SK-N-SH (cell line): ENCODE measurements at regions of chr11 and their contacts with region 1.

Region 1: GRCh38 chr11:74255741-74256369 is 55.6 kb downstream of the P4HA3 start:
- DNase-seq: peak; percentile 73
- H3K4me3 ChIP-seq: no peak overlapping the region; a peak in 1 of 4 replicates
- H3K27ac ChIP-seq: no peak overlapping the region
- H3K4me1 ChIP-seq: peaks cover 0 to 10% of the 10 kb centered on the region in 2 experiments; a peak in 1 of 4 replicates
- H3K27me3 ChIP-seq: no peaks in the 10 kb centered on the region
- CTCF ChIP-seq: peak; percentile 97
- EP300 ChIP-seq: no peak
- RAD21 ChIP-seq: peak; percentile 90

Region 2: DNA sequence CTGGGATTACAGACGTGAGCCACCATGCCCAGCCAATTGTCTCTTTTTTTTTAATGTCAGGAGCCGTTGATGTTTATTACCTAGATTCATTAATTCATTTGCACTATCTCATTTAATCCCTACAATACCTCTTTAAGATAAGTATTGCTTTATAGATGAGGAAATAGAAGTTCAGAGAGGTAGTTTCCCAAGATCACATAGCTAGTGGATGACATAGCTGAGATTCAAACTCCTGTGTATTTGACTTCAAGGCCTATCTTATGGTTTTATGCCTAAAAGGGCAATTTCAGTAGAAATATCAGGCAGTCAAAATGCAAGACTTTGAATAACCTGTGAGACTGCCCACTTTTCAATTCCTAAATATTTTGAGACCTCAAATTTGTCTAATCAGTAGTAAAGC is 18.3 kb before region 1 on chr11:
- CTCF ChIA-PET with region 1: interaction called, 16 read pairs
- POLR2A ChIA-PET with region 1: no interaction called
- DNase-seq: no peak
- H3K4me3 ChIP-seq: no peak overlapping the region
- H3K27ac ChIP-seq: no peak overlapping the region
- H3K4me1 ChIP-seq: no peaks in the 10 kb centered on the region
- H3K27me3 ChIP-seq: no peaks in the 10 kb centered on the region
- CTCF ChIP-seq: no peak
- EP300 ChIP-seq: no peak
- RAD21 ChIP-seq: no peak

Region 3: DNA sequence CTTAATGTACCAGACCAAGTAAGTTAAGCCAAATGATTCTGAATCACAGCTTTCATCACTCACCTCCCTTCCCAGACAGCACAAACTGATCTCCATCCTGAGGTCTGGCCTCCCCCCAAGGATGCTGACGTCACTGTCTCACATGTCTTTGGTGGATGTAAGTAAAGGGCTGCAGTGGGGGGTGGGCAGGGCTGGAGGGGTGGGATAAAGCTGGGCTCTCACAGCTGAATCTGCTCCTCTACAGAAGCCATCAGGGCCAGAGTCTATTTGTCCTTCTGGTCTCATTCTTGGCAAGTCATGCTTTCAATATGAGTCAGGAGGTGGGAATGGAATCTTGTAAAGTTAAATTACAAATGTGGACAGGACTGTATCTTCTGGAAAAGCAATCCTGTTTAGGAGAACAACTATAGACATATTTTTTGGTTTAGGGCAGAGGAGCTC is 22.9 kb after region 1 on chr11:
- CTCF ChIA-PET with region 1: interaction called, 10 read pairs
- POLR2A ChIA-PET with region 1: no interaction called
- DNase-seq: no peak
- H3K4me3 ChIP-seq: no peak overlapping the region
- H3K27ac ChIP-seq: peak overlapping the region; percentile 68 to 97; a peak in 3 of 4 replicates
- H3K4me1 ChIP-seq: peaks cover 2 to 32% of the 10 kb centered on the region in 2 experiments
- H3K27me3 ChIP-seq: no peaks in the 10 kb centered on the region
- CTCF ChIP-seq: no peak
- EP300 ChIP-seq: peak in 1 of 2 experiments; percentile 49; a peak in 1 of 4 replicates
- RAD21 ChIP-seq: no peak

Region 4: GRCh38 chr11:74321487-74322188 is 65.8 kb after region 1 on chr11:
- CTCF ChIA-PET with region 1: interaction called, 18 read pairs
- POLR2A ChIA-PET with region 1: no interaction called
- DNase-seq: peak; percentile 41
- H3K4me3 ChIP-seq: no peak overlapping the region; a peak in 1 of 4 replicates
- H3K27ac ChIP-seq: peak overlapping the region in 1 of 2 experiments; percentile 99; a peak in 2 of 4 replicates
- H3K4me1 ChIP-seq: peaks cover 9 to 35% of the 10 kb centered on the region in 2 experiments; a peak in 3 of 4 replicates
- H3K27me3 ChIP-seq: no peaks in the 10 kb centered on the region
- CTCF ChIP-seq: peak; percentile 71
- EP300 ChIP-seq: no peak
- RAD21 ChIP-seq: peak; percentile 61

Region 5: DNA sequence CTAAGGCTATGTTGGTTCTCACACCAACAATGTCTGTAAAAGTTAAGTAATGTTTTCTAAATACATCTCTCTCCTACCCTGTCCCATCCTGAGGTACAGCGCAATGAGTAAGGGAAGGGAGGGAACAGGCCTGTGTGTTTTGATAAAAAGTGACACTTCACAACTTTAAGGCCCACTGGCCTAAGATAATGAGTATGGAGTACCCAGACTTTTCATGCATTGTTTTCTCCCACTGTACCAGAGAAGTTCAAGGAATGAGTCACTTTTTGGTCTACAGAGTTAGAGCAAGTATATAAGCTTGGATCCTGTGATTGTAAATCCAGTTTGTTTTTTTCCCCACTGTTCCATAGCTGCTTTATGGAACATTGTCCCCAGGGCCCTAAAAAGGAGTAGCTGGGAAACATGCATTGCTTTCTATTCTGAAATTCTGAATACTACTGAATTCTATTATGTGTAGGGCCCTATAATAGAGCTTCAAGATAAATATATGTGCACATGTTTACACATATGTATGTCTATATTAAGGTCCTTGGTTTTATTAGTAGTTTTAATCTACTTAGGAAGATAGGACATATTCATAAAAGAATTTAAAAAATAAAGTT is 181.7 kb after region 1 on chr11:
- CTCF ChIA-PET with region 1: interaction called, 218 read pairs
- POLR2A ChIA-PET with region 1: no interaction called
- DNase-seq: no peak
- H3K4me3 ChIP-seq: no peak overlapping the region
- H3K27ac ChIP-seq: 0 out of 4 replicates have a peak overlapping the region, but pooled peaks of 1 of the 2 experiments have one; percentile 18
- H3K4me1 ChIP-seq: no peaks in the 10 kb centered on the region; a peak in 1 of 4 replicates
- H3K27me3 ChIP-seq: no peaks in the 10 kb centered on the region
- CTCF ChIP-seq: no peak
- EP300 ChIP-seq: no peak
- RAD21 ChIP-seq: no peak